Heart left ventricle (tissue), 16 donors: ENCODE measurements at regions of chr1 and their contacts with region 1.

Region 1: DNA sequence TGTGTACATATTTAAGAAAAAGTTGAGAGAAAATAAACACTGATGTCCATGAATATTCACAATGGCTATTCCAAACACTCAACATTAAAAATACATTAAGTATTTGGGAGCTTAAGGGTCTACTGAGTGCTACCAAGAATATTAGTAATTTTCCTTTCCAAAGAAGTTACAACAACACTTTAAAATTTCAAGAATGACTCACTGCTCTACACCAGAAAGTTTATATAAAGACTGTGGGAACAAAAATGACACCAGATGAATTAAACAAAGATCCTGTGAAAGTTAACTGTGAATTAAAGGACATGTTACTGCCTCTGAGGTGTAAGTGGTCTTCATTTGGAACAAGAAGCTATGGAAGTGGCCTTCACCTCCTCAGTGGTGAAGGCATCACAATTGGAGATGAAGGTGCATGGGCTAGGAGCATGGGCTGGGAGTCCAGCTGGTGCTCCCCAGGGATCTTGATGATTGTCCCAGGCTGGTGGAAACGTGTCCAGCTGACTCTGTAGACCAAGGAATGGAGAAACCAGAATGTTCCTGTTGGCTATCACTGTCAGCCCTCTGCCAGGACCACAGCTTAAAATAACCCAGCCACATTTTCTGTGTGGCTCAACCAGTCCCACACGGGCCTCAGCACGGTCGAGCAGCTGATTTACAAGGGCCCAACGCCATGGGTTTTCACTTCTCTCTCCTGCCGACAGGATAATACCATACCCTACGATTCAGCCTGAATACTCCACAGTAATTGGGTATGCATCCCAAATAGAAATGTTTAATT is 28.8 kb downstream of the TAF5L start:
- DNase-seq: peak; percentile 66 to 82 (median 70)
- ATAC-seq: peak; percentile 95 to 97 (median 97)
- H3K4me3 ChIP-seq: peak overlapping the region in 2 of 12 donors; percentile 14 to 25
- H3K27ac ChIP-seq: peak overlapping the region; percentile 69 to 90 (median 82)
- H3K4me1 ChIP-seq: peaks cover 0 to 42% (median 29%) of the 10 kb centered on the region in 12 donors
- H3K27me3 ChIP-seq: no peaks in the 10 kb centered on the region
- CTCF ChIP-seq: peak in 2 of 12 donors; percentile 8 to 34
- POLR2A ChIP-seq: no peak

Region 2: GRCh38 chr1:229579059-229579673 is 17.9 kb before region 1 on chr1:
- intact Hi-C with region 1: loop called in 1 of 10 experiments (anchors 2 kb)
- DNase-seq: peak; percentile 67 to 74 (median 72)
- ATAC-seq: peak; percentile 87 to 92 (median 89)
- H3K4me3 ChIP-seq: peak overlapping the region in 6 of 12 donors; percentile 5 to 38 (median 18)
- H3K27ac ChIP-seq: peak overlapping the region; percentile 27 to 68 (median 60)
- H3K4me1 ChIP-seq: peaks cover 4 to 32% (median 24%) of the 10 kb centered on the region in 12 donors
- H3K27me3 ChIP-seq: no peaks in the 10 kb centered on the region
- CTCF ChIP-seq: no peak
- POLR2A ChIP-seq: no peak